ENCODE measurements at regions of chr3 and their contacts with region 1.

Region 1: GRCh38 chr3:69691860-69692259 is 47.4 kb upstream of the MITF start:
- DNase-seq: no peak
- ATAC-seq: no peak
- H3K4me3 ChIP-seq: no peak overlapping the region
- H3K27ac ChIP-seq: 0 out of 6 replicates have a peak overlapping the region, but pooled peaks of 1 of the 2 experiments have one; percentile 36
- H3K4me1 ChIP-seq: 0 out of 3 replicates have a peak, but pooled peaks cover 8% of the 10 kb centered on the region
- CTCF ChIP-seq: no peak
- EP300 ChIP-seq: no peak
- POLR2A ChIP-seq: no peak
- RAD21 ChIP-seq: no peak

Region 2: DNA sequence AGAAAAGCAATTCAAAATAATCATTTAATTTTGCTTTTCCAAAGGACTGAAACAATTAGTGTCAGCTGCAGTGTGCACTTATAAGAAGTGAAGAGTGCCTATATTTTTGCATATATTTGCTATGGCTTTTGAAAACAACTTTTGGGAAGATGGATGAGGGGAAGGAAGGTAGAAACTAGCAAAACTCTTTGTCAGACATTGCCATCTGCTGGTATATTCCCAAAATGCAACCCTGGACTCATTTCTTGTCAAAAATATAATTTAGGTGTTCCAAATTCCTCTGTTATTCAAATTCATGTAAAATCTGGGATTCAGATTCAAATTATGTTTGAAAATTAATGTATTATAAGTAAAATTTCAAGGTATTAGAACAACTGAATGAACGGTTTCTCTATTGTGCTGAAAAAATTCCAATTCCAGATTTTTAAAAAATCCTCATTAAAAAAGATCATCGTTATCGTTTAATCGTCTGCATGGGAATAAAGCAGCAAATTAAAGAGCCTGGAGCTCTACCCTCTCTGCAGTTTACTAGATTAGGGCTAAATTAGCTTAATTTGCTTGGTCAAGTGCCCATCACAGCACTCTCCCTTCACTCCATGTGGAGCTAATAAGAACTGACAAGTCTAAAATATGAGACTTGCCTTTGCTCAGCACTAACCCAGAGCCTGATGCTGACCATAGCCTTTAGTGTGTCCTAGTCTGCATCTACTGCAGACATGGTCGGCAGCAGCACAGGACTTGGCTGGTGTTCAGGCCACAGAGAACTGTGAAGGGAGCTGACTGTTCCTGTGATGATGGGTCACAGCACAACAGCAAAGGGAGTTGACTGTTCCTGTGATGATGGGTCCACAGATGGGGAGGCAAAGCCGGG is 20.5 kb before region 1 on chr3:
- CTCF ChIA-PET with region 1: interaction called, 11 read pairs
- POLR2A ChIA-PET with region 1: no interaction called
- DNase-seq: peak; percentile 42 to 60
- ATAC-seq: peak; percentile 53 to 67; a peak in 3 of 6 replicates
- H3K4me3 ChIP-seq: no peak overlapping the region
- H3K27ac ChIP-seq: no peak overlapping the region
- H3K4me1 ChIP-seq: no peaks in the 10 kb centered on the region; the same call in 2 of the 3 replicates
- CTCF ChIP-seq: peak; percentile 84
- EP300 ChIP-seq: no peak
- POLR2A ChIP-seq: no peak
- RAD21 ChIP-seq: peak; percentile 88 to 89

Region 3: GRCh38 chr3:69739204-69740102 is 47.6 kb after region 1 on chr3 and contains the start of gene MITF:
- CTCF ChIA-PET with region 1: interaction called, 17 read pairs
- POLR2A ChIA-PET with region 1: interaction called, 6 read pairs
- DNase-seq: peak; percentile 84 to 89
- ATAC-seq: peak; percentile 97 to 99
- H3K4me3 ChIP-seq: peak within 1 kb of the TSS; percentile 85
- H3K27ac ChIP-seq: peak within 1 kb of the TSS; percentile 65 to 84
- H3K4me1 ChIP-seq: peaks cover 6% of the 10 kb centered on the region; the same call in 2 of the 3 replicates
- CTCF ChIP-seq: no peak
- EP300 ChIP-seq: no peak
- POLR2A ChIP-seq: peak; percentile 24
- RAD21 ChIP-seq: no peak
- polyA plus RNA-seq, gene MITF: 15.3 and 15.9 TPM in 2 replicates

Region 4: GRCh38 chr3:69855436-69856162 is 163.7 kb after region 1 on chr3:
- CTCF ChIA-PET with region 1: interaction called, 32 read pairs
- POLR2A ChIA-PET with region 1: no interaction called
- DNase-seq: peak in 1 of 2 experiments; percentile 53
- ATAC-seq: peak; percentile 83 to 87; a peak in 5 of 6 replicates
- H3K4me3 ChIP-seq: no peak overlapping the region
- H3K27ac ChIP-seq: peak overlapping the region in 1 of 2 experiments; percentile 18; a peak in 2 of 6 replicates
- H3K4me1 ChIP-seq: peaks cover 43% of the 10 kb centered on the region
- CTCF ChIP-seq: peak; percentile 68
- EP300 ChIP-seq: no peak
- POLR2A ChIP-seq: no peak
- RAD21 ChIP-seq: peak; percentile 74 to 78

Region 5: DNA sequence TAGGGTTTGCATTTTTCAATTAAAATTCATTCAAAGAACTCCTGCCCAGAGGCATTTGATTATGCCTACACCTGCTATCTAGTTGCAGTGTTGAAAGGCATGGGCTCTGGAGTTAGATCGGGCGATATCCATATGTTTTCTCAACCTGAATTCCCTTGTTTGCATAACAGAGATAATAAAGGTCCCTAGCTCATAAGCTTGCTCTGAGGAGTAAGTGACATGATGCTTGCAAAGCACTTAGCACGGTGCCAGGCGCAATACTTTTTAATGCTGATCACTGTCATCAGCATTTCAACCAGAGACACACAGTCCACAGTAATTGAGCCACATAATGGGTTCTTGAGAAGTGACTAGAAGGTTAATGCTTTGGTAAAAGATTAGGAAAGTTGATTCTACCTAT is 201.4 kb after region 1 on chr3:
- CTCF ChIA-PET with region 1: no interaction called
- POLR2A ChIA-PET with region 1: no interaction called
- DNase-seq: no peak
- ATAC-seq: no peak
- H3K4me3 ChIP-seq: no peak overlapping the region
- H3K27ac ChIP-seq: no peak overlapping the region
- H3K4me1 ChIP-seq: peaks cover 21% of the 10 kb centered on the region
- CTCF ChIP-seq: no peak
- EP300 ChIP-seq: no peak
- POLR2A ChIP-seq: no peak
- RAD21 ChIP-seq: no peak

Region 6: GRCh38 chr3:69948246-69948862 is 256.5 kb after region 1 on chr3:
- CTCF ChIA-PET with region 1: interaction called, 65 read pairs
- POLR2A ChIA-PET with region 1: no interaction called
- DNase-seq: peak in 1 of 2 experiments; percentile 43
- ATAC-seq: no peak
- H3K4me3 ChIP-seq: no peak overlapping the region
- H3K27ac ChIP-seq: peak overlapping the region; percentile 19 to 49; a peak in 3 of 6 replicates
- H3K4me1 ChIP-seq: peaks cover 12% of the 10 kb centered on the region; the same call in 2 of the 3 replicates
- CTCF ChIP-seq: peak; percentile 89
- EP300 ChIP-seq: no peak
- POLR2A ChIP-seq: no peak
- RAD21 ChIP-seq: peak; percentile 79 to 89

Region 7: DNA sequence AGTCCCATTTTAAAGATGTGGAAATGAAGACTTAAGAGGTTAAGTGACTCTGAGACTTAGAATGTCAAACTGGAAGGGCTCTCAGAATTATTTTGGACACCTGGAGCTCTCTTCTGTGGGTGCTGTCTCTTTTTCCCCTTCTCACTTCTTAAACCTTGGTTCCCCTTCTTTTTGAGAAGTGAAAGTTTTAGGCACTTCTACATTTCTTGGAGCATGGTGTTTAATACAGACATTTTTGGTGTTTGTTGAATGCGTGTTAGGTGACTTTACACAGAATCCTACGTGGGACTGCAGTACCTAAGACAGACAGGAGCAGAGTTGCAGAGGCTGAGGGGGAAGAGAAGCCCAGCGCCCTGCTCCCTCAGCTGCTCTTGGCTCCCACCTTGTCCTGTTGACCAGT is 487.3 kb after region 1 on chr3:
- CTCF ChIA-PET with region 1: no interaction called
- POLR2A ChIA-PET with region 1: no interaction called
- DNase-seq: no peak
- ATAC-seq: no peak
- H3K4me3 ChIP-seq: no peak overlapping the region
- H3K27ac ChIP-seq: no peak overlapping the region
- H3K4me1 ChIP-seq: no peaks in the 10 kb centered on the region
- CTCF ChIP-seq: no peak
- EP300 ChIP-seq: no peak
- POLR2A ChIP-seq: no peak
- RAD21 ChIP-seq: no peak

Measured in A549 (cell line).